ENCODE measurements at regions of chr9 and their contacts with region 1.

Region 1: GRCh38 chr9:35657546-35658136 is at the start of gene RMRP:
- DNase-seq: peak in 1 of 2 donors; percentile 99
- H3K4me3 ChIP-seq: peak within 1 kb of the TSS; percentile 84 to 97
- H3K27ac ChIP-seq: peak within 1 kb of the TSS; percentile 96
- H3K4me1 ChIP-seq: peaks cover 18% of the 10 kb centered on the region
- H3K27me3 ChIP-seq: no peaks in the 10 kb centered on the region
- CTCF ChIP-seq: peak in 2 of 3 experiments; percentile 3 to 43
- POLR2A ChIP-seq: peak in 1 of 2 donors; percentile 59
- total RNA-seq, gene RMRP: 8,462 TPM

Region 2: GRCh38 chr9:33843312-33843961 is 1814.2 kb before region 1 on chr9:
- intact Hi-C with region 1: no loop called
- DNase-seq: no peak
- H3K4me3 ChIP-seq: no peak overlapping the region
- H3K27ac ChIP-seq: no peak overlapping the region
- H3K4me1 ChIP-seq: peaks cover 56% of the 10 kb centered on the region
- H3K27me3 ChIP-seq: no peaks in the 10 kb centered on the region
- CTCF ChIP-seq: no peak
- POLR2A ChIP-seq: no peak

Region 3: DNA sequence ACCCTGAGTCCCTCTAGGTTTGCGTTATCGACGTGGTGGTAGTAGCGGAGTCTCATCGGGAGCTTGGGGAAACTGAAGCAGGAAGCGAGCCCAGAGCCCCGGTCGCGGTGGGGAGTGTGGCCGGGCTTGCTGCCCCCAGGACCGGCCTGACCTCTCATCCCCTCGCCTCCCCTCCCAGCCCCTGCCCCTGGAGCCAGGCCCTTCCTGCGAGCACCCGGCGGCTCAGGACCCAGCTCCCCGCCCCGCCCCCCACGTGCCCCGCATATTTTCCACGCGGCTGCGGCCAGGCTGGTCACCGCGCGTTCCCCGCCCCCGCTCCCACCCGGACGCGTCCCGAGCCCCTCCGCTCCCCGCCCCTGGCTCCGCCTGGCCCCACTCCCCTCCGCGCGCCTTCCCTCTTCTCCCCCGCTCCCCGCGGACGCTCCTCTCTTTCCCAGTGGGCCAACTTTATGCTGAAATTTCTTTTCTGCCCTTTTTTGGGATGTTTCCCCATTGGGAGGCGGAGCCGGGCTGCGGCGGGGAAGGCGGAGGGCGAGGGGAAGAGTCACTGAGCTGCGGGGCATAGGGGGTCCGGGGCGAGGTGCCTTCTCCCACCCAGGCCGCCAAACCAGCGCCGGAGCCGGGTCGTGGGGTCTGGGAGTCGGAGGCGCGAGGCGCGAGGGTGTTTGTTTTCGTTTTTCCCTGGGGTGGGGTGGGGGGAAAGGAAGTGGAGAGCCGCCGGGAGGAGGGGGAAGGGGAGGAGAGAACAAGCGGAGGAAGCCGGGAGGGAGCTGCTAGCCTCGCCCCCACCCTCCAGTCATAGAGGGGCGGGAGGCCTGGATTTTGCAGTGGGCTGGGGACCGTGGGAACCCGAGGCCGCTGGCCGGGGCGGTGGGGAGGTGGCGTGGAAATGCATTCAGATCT is 33.0 kb after region 1 on chr9:
- intact Hi-C with region 1: loop called (anchors 5 kb)
- DNase-seq: no peak
- H3K4me3 ChIP-seq: peak overlapping the region; percentile 79 to 90
- H3K27ac ChIP-seq: peak overlapping the region; percentile 96
- H3K4me1 ChIP-seq: peaks cover 32% of the 10 kb centered on the region
- H3K27me3 ChIP-seq: no peaks in the 10 kb centered on the region
- CTCF ChIP-seq: no peak
- POLR2A ChIP-seq: peak in 1 of 2 donors; percentile 64

Region 4: DNA sequence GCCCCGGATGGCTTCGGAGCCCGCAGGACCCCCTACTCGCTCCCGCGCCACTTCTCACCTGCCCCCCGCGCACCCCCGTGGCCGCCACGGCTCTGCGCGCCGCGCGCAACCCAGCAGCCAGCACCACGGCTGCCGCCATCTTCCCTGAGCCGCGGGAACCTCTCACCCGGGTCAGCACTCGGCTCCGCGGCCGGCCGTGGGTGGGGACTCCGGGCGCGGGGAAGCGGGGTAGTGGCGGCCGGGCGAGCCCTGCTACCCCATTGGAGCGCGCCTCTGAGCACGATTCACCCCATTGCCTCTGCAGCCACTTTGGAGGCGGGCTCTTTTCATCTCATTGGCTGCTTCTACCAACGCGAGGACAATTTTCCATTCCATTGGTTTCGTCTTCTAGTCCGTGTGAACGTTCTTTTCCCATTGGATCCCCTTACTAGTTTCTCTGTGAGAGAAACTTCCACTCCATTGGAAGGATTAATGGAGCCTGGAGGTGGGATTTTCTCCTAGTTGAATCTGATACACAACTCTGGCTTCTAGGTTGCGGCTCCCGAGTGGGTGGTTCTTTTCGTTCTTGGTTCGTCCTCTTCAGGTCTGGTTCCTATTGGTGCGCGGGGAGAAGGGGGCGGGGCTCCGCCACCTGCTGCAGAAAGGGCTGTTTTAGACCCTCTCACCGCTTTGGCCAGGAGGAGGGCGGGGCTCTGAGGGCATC is 157.4 kb after region 1 on chr9 and contains the start of gene HINT2:
- intact Hi-C with region 1: loop called (anchors 10 kb)
- DNase-seq: peak in 1 of 2 donors; percentile 99
- H3K4me3 ChIP-seq: peak within 1 kb of the TSS; percentile 86 to 97
- H3K27ac ChIP-seq: peak within 1 kb of the TSS; percentile 95
- H3K4me1 ChIP-seq: peaks cover 24% of the 10 kb centered on the region
- H3K27me3 ChIP-seq: no peaks in the 10 kb centered on the region
- CTCF ChIP-seq: no peak
- POLR2A ChIP-seq: peak; percentile 47 to 87
- total RNA-seq, gene HINT2: 24.1 TPM